GM12878 (cell line): ENCODE measurements at regions of chr11 and their contacts with region 1.

Region 1: DNA sequence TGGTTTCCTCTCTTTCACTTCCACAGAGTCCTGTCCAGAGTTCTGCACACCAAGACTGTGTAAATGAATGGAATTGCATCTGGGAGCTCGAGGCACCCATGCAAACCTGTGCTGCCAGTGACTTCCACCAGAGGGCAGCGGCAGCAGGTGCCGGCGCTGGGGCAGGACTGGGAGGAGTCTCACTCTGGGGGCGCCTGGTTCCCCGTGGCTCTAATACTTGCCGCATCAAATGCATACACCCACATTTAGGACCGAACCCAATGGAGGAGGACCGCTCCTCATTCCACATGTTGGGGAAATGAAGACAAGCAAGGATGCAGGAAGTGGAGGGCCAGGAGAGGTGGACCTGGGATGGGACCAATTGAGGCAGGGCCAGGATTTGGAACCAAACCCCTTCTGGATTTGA is 1.1 kb upstream of the CD6 start:
- DNase-seq: no peak
- ATAC-seq: peak; percentile 96
- H3K4me3 ChIP-seq: no peak overlapping the region
- H3K27ac ChIP-seq: no peak overlapping the region
- H3K4me1 ChIP-seq: peaks cover 6% of the 10 kb centered on the region; the same call in 1 of the 2 replicates
- H3K27me3 ChIP-seq: no peaks in the 10 kb centered on the region
- CTCF ChIP-seq: peak; percentile 87 to 96 (median 94)
- EP300 ChIP-seq: no peak
- POLR2A ChIP-seq: no peak
- RAD21 ChIP-seq: peak; percentile 90

Region 2: DNA sequence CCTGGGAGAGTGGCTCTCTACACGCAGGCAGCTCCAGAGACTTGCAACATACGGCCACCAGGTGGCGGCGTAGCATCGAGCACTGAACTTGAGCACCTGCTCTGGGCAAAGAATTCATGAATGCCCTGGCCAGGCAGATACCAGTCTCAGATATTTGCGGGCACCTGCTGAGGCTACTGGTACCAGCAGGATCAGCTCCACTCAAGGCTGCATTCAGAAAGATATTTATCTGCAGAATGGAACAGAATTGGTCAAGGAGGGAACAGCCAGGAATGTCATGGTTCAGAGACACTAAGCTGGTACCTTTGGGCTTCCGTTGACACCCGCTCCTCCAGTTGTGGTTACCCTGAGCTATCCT is 139.2 kb before region 1 on chr11:
- CTCF ChIA-PET with region 1: interaction called, 16 read pairs
- POLR2A ChIA-PET with region 1: no interaction called
- RAD21 ChIA-PET with region 1: interaction called, 11 read pairs
- SMC1A ChIA-PET with region 1: interaction called, 11 read pairs
- in situ Hi-C with region 1: no loop called
- intact Hi-C with region 1: no loop called
- DNase-seq: peak; percentile 26
- ATAC-seq: peak; percentile 98
- H3K4me3 ChIP-seq: no peak overlapping the region
- H3K27ac ChIP-seq: no peak overlapping the region
- H3K4me1 ChIP-seq: no peaks in the 10 kb centered on the region; the same call in 1 of the 2 replicates
- H3K27me3 ChIP-seq: no peaks in the 10 kb centered on the region; a peak in 2 of 4 replicates
- CTCF ChIP-seq: peak; percentile 94 to 95 (median 95)
- EP300 ChIP-seq: no peak
- POLR2A ChIP-seq: no peak
- RAD21 ChIP-seq: peak; percentile 96

Region 3: DNA sequence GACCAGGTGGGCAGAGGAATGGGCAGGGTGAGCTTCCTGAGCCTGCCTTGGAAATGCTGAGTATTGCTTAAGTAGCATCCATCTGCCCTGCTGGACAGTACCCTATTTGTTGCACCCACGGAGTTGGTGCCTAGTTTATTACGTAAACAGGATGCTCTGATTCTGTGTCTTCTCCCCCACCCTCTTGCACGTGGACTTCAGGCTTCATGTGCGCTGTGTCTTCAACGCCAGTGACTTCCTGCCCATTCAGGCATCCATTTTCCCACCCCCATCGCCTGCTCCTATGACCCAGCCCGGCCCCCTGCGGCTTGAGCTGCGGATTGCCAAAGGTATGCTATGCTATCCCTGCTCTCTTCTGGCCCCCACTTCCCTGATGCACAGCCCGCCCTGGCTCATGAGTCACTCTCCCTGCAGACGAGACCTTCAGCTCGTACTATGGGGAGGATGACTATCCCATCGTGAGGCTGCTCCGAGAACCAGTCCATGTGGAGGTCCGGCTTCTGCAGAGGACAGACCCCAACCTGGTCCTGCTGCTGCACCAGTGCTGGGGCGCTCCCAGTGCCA is 97.3 kb before region 1 on chr11:
- CTCF ChIA-PET with region 1: no interaction called
- POLR2A ChIA-PET with region 1: no interaction called
- RAD21 ChIA-PET with region 1: no interaction called
- SMC1A ChIA-PET with region 1: no interaction called
- in situ Hi-C with region 1: no loop called
- intact Hi-C with region 1: no loop called
- DNase-seq: no peak
- ATAC-seq: no peak
- H3K4me3 ChIP-seq: no peak overlapping the region
- H3K27ac ChIP-seq: no peak overlapping the region
- H3K4me1 ChIP-seq: no peaks in the 10 kb centered on the region
- H3K27me3 ChIP-seq: no peaks in the 10 kb centered on the region
- CTCF ChIP-seq: no peak
- EP300 ChIP-seq: no peak
- POLR2A ChIP-seq: no peak
- RAD21 ChIP-seq: no peak

Region 4: DNA sequence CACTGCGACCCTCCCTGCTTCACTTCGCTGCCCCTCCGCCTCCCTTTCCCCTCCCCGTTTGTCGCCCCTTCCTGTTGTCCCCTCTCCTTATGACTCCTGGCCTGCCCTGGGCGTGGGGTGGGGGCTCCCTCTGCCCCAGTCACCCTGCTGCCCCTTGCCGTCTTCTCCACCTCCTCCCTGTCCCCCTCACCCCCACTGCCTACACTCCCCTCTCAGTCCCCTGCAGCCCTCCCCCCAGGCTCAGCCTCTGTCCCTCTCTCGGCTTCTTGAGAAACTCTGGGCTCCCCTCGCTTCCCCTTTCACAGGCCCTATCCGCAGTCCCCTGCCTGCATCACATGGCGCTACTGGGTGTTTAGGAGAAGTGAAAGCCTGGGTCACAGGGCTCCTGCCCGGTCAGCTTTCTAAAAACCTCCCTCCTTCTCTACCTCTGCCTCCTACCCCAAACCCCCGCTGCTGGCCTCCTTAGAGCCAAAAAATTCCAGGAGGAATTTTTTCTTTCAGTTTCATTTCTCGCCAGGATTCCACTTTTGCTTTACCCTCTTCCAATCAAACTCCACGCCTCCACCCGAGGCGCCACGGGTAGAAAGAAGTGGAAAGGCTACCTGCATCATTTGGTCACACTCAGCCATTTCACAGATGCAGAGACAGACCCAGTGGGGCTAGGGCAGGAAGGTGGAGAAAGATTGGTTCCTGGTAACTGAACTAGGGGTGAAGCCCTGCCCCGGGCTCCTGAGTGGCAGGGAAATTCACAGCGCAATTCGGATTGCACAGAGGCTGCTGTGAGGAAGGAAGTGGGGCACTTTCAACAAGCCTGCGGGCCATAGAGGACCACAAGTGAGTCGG is 18.3 kb before region 1 on chr11 and contains the start of gene SLC15A3:
- CTCF ChIA-PET with region 1: interaction called, 26 read pairs
- POLR2A ChIA-PET with region 1: no interaction called
- RAD21 ChIA-PET with region 1: interaction called, 17 read pairs
- SMC1A ChIA-PET with region 1: interaction called, 16 read pairs
- in situ Hi-C with region 1: no loop called
- intact Hi-C with region 1: no loop called
- DNase-seq: peak; percentile 61
- ATAC-seq: peak; percentile 88
- H3K4me3 ChIP-seq: peak within 1 kb of the TSS; percentile 94
- H3K27ac ChIP-seq: peak within 1 kb of the TSS; percentile 97
- H3K4me1 ChIP-seq: peaks cover 28% of the 10 kb centered on the region
- H3K27me3 ChIP-seq: no peaks in the 10 kb centered on the region
- CTCF ChIP-seq: no peak
- EP300 ChIP-seq: 0 out of 4 replicates have a peak, but pooled peaks of 1 of the 2 experiments have one; percentile 23
- POLR2A ChIP-seq: peak; percentile 85
- RAD21 ChIP-seq: no peak
- polyA plus RNA-seq, gene SLC15A3: 17.7 to 55.4 TPM

Region 5: GRCh38 chr11:61061081-61061826 is 90.9 kb after region 1 on chr11:
- CTCF ChIA-PET with region 1: interaction called, 10 read pairs
- POLR2A ChIA-PET with region 1: no interaction called
- RAD21 ChIA-PET with region 1: interaction called, 4 read pairs
- SMC1A ChIA-PET with region 1: interaction called, 6 read pairs
- in situ Hi-C with region 1: no loop called
- intact Hi-C with region 1: no loop called
- DNase-seq: peak; percentile 97
- ATAC-seq: peak; percentile 90
- H3K4me3 ChIP-seq: peak overlapping the region; percentile 48; the same call in 1 of the 2 replicates
- H3K27ac ChIP-seq: peak overlapping the region; percentile 84
- H3K4me1 ChIP-seq: peaks cover 30% of the 10 kb centered on the region
- H3K27me3 ChIP-seq: no peaks in the 10 kb centered on the region
- CTCF ChIP-seq: no peak
- EP300 ChIP-seq: peak; percentile 91 to 99
- POLR2A ChIP-seq: peak; percentile 43; the same call in 1 of the 2 replicates
- RAD21 ChIP-seq: peak; percentile 27

Region 6: GRCh38 chr11:61120706-61121191 is 150.4 kb after region 1 on chr11:
- CTCF ChIA-PET with region 1: interaction called, 11 read pairs
- POLR2A ChIA-PET with region 1: no interaction called
- RAD21 ChIA-PET with region 1: no interaction called
- SMC1A ChIA-PET with region 1: interaction called, 4 read pairs
- in situ Hi-C with region 1: no loop called
- intact Hi-C with region 1: no loop called
- DNase-seq: no peak
- ATAC-seq: peak; percentile 52
- H3K4me3 ChIP-seq: no peak overlapping the region
- H3K27ac ChIP-seq: no peak overlapping the region
- H3K4me1 ChIP-seq: no peaks in the 10 kb centered on the region
- H3K27me3 ChIP-seq: no peaks in the 10 kb centered on the region
- CTCF ChIP-seq: no peak
- EP300 ChIP-seq: no peak
- POLR2A ChIP-seq: no peak
- RAD21 ChIP-seq: no peak

Region 7: DNA sequence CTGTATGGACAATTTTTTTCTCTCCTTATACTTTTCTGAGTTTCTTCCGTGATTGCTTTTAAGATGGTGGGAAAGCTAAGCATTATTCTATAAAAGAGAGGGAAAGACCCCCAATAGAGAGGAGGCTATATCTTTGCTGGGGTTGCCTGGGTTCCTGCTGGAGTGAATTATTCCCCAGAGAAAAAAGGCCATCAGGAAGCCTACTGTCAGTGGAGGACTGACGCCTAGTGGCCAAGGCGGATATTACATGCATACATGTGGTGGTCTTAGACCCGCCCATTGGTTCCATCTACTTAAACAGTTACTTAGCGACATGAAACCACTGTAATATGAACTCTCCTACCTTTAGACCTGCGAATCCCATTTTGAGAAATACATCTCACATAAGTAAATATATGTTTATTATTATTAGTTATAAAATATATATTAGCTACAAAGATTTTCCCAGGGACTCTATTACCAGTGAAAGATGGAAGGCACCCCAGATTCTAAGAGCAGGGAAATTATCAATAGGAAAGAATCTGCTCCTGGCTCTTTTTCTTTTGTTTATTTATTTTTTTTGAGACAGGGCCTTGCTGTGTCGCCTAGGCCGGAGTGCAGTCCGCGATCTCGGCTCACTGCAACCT is 217.2 kb after region 1 on chr11:
- CTCF ChIA-PET with region 1: interaction called, 34 read pairs
- POLR2A ChIA-PET with region 1: interaction called, 3 read pairs
- RAD21 ChIA-PET with region 1: interaction called, 12 read pairs
- SMC1A ChIA-PET with region 1: interaction called, 4 read pairs
- in situ Hi-C with region 1: no loop called
- intact Hi-C with region 1: loop called (anchors 1 kb)
- DNase-seq: peak; percentile 60
- ATAC-seq: peak; percentile 97
- H3K4me3 ChIP-seq: no peak overlapping the region
- H3K27ac ChIP-seq: no peak overlapping the region
- H3K4me1 ChIP-seq: no peaks in the 10 kb centered on the region
- H3K27me3 ChIP-seq: no peaks in the 10 kb centered on the region
- CTCF ChIP-seq: peak; percentile 90 to 98 (median 96); a peak in 5 of 6 replicates
- EP300 ChIP-seq: no peak
- POLR2A ChIP-seq: no peak
- RAD21 ChIP-seq: peak; percentile 98

Region 8: DNA sequence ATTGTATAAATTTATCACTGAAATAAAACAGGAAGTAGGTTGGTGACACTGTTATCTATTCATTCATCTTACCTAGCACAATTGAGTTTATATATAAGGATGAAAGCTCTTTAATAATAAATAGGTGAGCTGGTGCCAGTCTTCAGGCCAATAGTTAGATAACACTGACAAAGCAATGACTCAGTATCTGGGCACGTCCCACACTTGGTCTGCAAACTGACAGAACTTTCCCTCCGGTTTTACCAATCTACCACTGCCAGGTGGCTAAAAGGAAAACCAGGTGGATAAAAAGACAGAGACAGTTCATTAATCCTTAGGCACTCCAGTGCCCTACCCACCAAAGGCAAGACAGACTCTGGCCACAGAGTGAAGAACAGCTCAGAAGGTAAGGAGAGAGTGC is 344.9 kb after region 1 on chr11:
- CTCF ChIA-PET with region 1: no interaction called
- POLR2A ChIA-PET with region 1: no interaction called
- RAD21 ChIA-PET with region 1: no interaction called
- SMC1A ChIA-PET with region 1: no interaction called
- in situ Hi-C with region 1: no loop called
- intact Hi-C with region 1: no loop called
- DNase-seq: no peak
- ATAC-seq: no peak
- H3K4me3 ChIP-seq: no peak overlapping the region
- H3K27ac ChIP-seq: no peak overlapping the region
- H3K4me1 ChIP-seq: no peaks in the 10 kb centered on the region
- H3K27me3 ChIP-seq: no peaks in the 10 kb centered on the region
- CTCF ChIP-seq: no peak
- EP300 ChIP-seq: no peak
- POLR2A ChIP-seq: no peak
- RAD21 ChIP-seq: no peak

Region 9: DNA sequence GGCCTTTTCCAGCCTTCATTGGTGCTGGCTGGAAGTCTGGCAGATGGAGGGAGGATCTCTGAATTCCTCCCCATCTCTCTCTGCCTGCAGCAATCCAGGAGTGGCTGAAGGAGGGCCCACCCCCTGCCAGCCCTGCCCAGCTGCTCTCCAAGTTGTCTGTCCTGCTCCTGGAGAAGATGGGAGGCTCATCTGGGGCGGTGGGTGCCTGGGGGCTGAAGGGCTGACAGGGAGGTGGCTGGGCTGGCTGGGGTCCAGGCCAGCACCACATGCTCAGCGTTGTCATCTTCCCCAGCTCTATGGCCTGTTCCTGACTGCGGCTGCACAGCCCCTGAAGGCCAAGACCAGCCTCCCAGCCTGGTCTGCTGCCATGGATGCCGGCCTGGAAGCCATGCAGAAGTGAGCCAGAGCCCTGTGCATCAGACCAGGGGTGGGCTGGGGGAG is 374.8 kb after region 1 on chr11:
- CTCF ChIA-PET with region 1: no interaction called
- POLR2A ChIA-PET with region 1: no interaction called
- RAD21 ChIA-PET with region 1: no interaction called
- SMC1A ChIA-PET with region 1: no interaction called
- in situ Hi-C with region 1: no loop called
- intact Hi-C with region 1: no loop called
- DNase-seq: no peak
- ATAC-seq: no peak
- H3K4me3 ChIP-seq: no peak overlapping the region
- H3K27ac ChIP-seq: no peak overlapping the region
- H3K4me1 ChIP-seq: no peaks in the 10 kb centered on the region
- H3K27me3 ChIP-seq: no peaks in the 10 kb centered on the region
- CTCF ChIP-seq: no peak
- EP300 ChIP-seq: no peak
- POLR2A ChIP-seq: 0 out of 2 replicates have a peak, but pooled peaks have one; percentile 10
- RAD21 ChIP-seq: no peak

Region 10: GRCh38 chr11:61567286-61568061 is 597.1 kb after region 1 on chr11:
- CTCF ChIA-PET with region 1: no interaction called
- POLR2A ChIA-PET with region 1: no interaction called
- RAD21 ChIA-PET with region 1: no interaction called
- SMC1A ChIA-PET with region 1: no interaction called
- in situ Hi-C with region 1: no loop called
- intact Hi-C with region 1: no loop called
- DNase-seq: no peak
- ATAC-seq: peak; percentile 86
- H3K4me3 ChIP-seq: no peak overlapping the region
- H3K27ac ChIP-seq: no peak overlapping the region
- H3K4me1 ChIP-seq: no peaks in the 10 kb centered on the region
- H3K27me3 ChIP-seq: peaks cover 0 to 2% of the 10 kb centered on the region in 2 experiments; a peak in 3 of 4 replicates
- CTCF ChIP-seq: peak in 1 of 3 experiments; percentile 42; a peak in 2 of 6 replicates
- EP300 ChIP-seq: no peak
- POLR2A ChIP-seq: no peak
- RAD21 ChIP-seq: no peak